Naive thymus-derived CD4-positive, alpha-beta T cell (primary cell): ENCODE measurements at regions of chr21 and their contacts with region 1.

Region 1: DNA sequence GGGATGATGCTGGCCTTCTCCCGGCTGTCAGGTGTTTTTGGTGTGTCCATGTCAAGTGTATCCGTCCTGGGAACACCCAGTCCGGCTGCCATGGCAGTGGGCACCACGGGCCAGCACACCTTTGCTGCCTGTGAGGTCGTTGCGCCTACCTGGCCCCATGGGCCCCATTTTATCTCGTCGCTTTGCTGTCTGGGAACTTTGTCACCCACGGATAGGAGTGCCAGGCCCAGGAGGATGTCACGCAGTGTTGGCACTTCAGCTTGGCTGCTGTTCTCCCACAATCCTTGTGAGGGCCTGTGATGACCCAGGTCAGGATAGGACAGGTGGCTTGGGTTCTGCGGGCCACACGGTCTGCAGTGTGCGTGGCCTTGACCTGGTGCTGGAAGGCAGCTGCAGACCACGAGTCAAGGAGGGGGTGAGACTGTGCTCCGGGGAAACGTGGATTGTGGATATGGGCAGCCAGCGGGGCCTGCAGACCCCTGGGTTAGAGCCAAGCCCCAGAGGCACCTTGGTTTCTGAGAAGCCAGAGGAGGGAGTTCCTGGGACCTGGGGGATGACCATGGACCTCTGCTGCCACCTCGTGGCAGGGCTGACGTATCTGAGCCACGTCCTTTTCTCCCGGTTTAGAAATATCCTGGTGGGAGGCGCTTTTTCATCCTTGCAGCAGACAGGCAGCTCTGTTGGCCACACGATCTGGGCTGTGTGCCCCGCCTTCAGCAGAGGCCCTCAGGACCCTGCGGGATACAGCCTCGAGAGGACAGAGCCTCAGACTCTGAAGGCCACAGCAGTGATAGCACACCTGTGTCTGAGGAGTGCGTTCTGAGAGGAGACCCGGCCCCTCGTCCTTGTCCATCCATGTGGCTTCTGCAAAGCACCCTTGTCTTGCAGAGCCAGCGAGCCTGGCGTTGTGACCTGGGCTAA is 161.1 kb upstream of the COL6A1 start:
- DNase-seq: peak; percentile 59 to 81 (median 76)
- ATAC-seq: peak; percentile 80
- H3K4me3 ChIP-seq: no peak overlapping the region
- H3K4me3 Mint-ChIP-seq: peak overlapping the region in 1 of 10 donors; percentile 1
- H3K27ac ChIP-seq: no peak overlapping the region
- H3K27ac Mint-ChIP-seq: peak overlapping the region in 7 of 9 donors; percentile 26 to 89 (median 58)
- H3K4me1 ChIP-seq: peaks cover 0 to 9% of the 10 kb centered on the region in 2 donors
- H3K4me1 Mint-ChIP-seq: peaks cover 0 to 36% (median 17%) of the 10 kb centered on the region in 7 donors
- H3K27me3 ChIP-seq: no peaks in the 10 kb centered on the region
- H3K27me3 Mint-ChIP-seq: no peaks in the 10 kb centered on the region

Region 2: DNA sequence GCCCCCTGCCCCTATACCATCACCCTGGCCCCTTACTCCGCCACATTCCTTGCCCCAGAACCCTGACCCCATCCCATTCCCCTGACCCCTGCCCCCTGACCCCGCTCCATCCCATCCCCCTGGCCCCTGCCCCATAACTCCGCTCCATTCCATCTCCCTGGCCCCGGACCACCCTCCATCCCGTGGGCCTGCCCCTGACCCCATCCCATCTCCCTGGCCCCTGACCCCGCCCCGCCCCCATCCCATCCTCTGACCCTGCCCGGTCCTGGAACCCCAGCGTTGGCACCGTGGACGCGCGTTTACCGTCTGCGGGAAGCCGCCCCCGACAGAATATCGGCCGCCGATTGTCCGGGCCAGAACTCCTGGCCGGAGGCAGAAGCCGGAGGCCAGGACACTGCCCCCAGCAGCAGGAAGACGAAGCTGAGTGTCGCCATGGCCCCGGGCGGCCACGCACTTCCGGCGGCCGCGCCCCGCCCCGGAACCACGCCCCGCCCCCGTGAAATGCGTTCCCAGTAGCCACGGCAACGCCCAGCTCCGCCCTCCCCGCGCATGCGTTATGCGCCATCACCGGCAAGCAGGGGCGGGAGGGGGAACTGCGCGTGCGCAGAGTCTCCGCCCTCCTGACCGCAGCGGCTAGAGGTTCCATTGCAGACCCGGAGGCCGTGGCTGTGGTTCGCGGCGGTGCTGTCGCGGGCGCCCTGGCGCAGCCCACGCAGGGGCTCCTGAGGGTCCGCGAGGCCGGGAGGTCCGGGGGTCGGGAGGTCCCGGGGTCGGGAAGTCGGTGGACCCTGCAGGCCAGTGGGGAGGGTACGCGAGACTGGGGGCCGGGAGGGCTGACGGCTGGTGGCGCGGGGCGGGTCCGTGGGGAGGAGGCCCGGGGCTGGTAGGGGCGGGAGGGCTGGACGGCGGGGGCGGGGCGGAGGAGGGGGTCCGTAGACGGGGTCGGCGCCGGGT is 532.7 kb before region 1 on chr21 and contains the start of gene POFUT2:
- CTCF ChIA-PET with region 1: no interaction called
- POLR2A ChIA-PET with region 1: no interaction called
- intact Hi-C with region 1: loop called in 1 of 2 experiments (anchors 1 kb)
- DNase-seq: peak; percentile 95 to 100 (median 98)
- ATAC-seq: peak; percentile 91
- H3K4me3 ChIP-seq: peak within 1 kb of the TSS; percentile 68
- H3K4me3 Mint-ChIP-seq: peak within 1 kb of the TSS; percentile 68 to 88 (median 87)
- H3K27ac ChIP-seq: peak within 1 kb of the TSS; percentile 97
- H3K27ac Mint-ChIP-seq: peak within 1 kb of the TSS; percentile 72 to 93 (median 87)
- H3K4me1 ChIP-seq: peaks cover 7 to 16% of the 10 kb centered on the region in 2 donors
- H3K4me1 Mint-ChIP-seq: peaks cover 11 to 46% (median 30%) of the 10 kb centered on the region in 7 donors
- H3K27me3 ChIP-seq: no peaks in the 10 kb centered on the region
- H3K27me3 Mint-ChIP-seq: peaks cover 0 to 10% (median 0%) of the 10 kb centered on the region in 5 donors
- total RNA-seq, gene POFUT2: 20.1 to 53.3 (median 47.8) TPM

Region 3: GRCh38 chr21:45478115-45478801 is 342.2 kb before region 1 on chr21:
- CTCF ChIA-PET with region 1: interaction called, 3 read pairs
- POLR2A ChIA-PET with region 1: no interaction called
- intact Hi-C with region 1: loop called (anchors 1 kb)
- DNase-seq: peak; percentile 66 to 88 (median 84)
- ATAC-seq: peak; percentile 88
- H3K4me3 ChIP-seq: peak overlapping the region; percentile 78
- H3K4me3 Mint-ChIP-seq: peak overlapping the region; percentile 78 to 91 (median 84)
- H3K27ac ChIP-seq: peak overlapping the region; percentile 93
- H3K27ac Mint-ChIP-seq: peak overlapping the region; percentile 93 to 100 (median 99)
- H3K4me1 ChIP-seq: peaks cover 14 to 53% of the 10 kb centered on the region in 2 donors
- H3K4me1 Mint-ChIP-seq: peaks cover 27 to 65% (median 43%) of the 10 kb centered on the region in 7 donors
- H3K27me3 ChIP-seq: no peaks in the 10 kb centered on the region
- H3K27me3 Mint-ChIP-seq: no peaks in the 10 kb centered on the region

Region 4: DNA sequence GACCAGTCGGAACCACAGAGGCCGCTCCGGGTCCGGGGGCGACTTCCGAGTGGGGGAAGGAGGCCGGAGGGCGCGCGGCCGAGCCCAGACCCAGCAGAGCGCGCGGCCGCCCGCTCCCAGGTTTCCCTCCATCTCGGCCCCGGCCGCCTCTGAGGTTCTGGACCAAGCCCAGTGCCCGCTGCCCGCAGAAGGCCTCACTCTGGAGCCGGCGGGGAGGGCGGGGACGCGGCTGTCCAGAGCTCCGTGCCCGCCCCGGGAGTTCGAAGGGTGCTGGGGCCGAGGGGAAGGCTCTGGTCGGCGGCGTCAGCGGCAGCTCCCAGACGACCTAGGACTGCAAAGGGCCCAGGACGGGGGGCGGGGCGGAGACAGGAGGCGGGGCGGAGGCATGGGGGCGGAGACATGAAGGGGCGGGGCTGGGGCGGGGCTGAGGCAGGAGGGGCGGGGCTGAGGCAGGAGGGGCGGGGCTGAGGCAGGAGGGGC is 230.1 kb before region 1 on chr21:
- CTCF ChIA-PET with region 1: interaction called, 3 read pairs
- POLR2A ChIA-PET with region 1: no interaction called
- intact Hi-C with region 1: loop called in 1 of 2 experiments (anchors 2 kb)
- DNase-seq: peak in 3 of 9 donors; percentile 72 to 81 (median 78)
- ATAC-seq: peak; percentile 83
- H3K4me3 ChIP-seq: peak overlapping the region; percentile 42
- H3K4me3 Mint-ChIP-seq: peak overlapping the region in 8 of 10 donors; percentile 21 to 69 (median 48)
- H3K27ac ChIP-seq: peak overlapping the region; percentile 65
- H3K27ac Mint-ChIP-seq: peak overlapping the region in 1 of 9 donors; percentile 16
- H3K4me1 ChIP-seq: peaks cover 21 to 22% of the 10 kb centered on the region in 2 donors
- H3K4me1 Mint-ChIP-seq: peaks cover 0 to 22% (median 7%) of the 10 kb centered on the region in 7 donors
- H3K27me3 ChIP-seq: no peaks in the 10 kb centered on the region
- H3K27me3 Mint-ChIP-seq: peaks cover 0 to 17% (median 11%) of the 10 kb centered on the region in 5 donors

Region 5: GRCh38 chr21:45724345-45724961 is 96.0 kb before region 1 on chr21:
- CTCF ChIA-PET with region 1: no interaction called
- POLR2A ChIA-PET with region 1: no interaction called
- intact Hi-C with region 1: no loop called
- DNase-seq: no peak
- ATAC-seq: no peak
- H3K4me3 ChIP-seq: no peak overlapping the region
- H3K4me3 Mint-ChIP-seq: no peak overlapping the region
- H3K27ac ChIP-seq: no peak overlapping the region
- H3K27ac Mint-ChIP-seq: peak overlapping the region in 1 of 9 donors; percentile 86
- H3K4me1 ChIP-seq: no peaks in the 10 kb centered on the region
- H3K4me1 Mint-ChIP-seq: peaks cover 0 to 12% (median 3%) of the 10 kb centered on the region in 7 donors
- H3K27me3 ChIP-seq: no peaks in the 10 kb centered on the region
- H3K27me3 Mint-ChIP-seq: peaks cover 0 to 5% (median 0%) of the 10 kb centered on the region in 5 donors

Region 6: DNA sequence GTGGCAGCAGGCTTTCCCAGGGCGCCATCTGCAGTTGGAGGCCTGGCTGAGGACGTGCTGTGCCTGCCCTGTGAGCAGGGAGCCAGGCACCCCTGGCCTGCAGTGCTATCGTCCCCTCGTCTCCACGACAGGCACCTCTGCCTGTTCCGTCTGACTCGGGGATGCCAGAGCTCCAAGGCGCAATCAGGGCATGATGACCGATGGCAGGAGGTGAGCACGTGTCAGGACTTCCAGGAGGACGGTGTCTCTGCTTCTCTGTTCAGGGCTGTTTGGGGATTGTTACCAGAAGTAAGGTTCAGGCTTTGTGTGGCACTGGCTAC is 51.7 kb before region 1 on chr21:
- CTCF ChIA-PET with region 1: no interaction called
- POLR2A ChIA-PET with region 1: no interaction called
- intact Hi-C with region 1: loop called in 1 of 2 experiments (anchors 5 kb)
- DNase-seq: peak in 1 of 9 donors; percentile 45
- ATAC-seq: no peak
- H3K4me3 ChIP-seq: no peak overlapping the region
- H3K4me3 Mint-ChIP-seq: peak overlapping the region in 7 of 10 donors; percentile 43 to 76 (median 56)
- H3K27ac ChIP-seq: no peak overlapping the region
- H3K27ac Mint-ChIP-seq: peak overlapping the region; percentile 53 to 97 (median 94)
- H3K4me1 ChIP-seq: peaks cover 0 to 29% of the 10 kb centered on the region in 2 donors
- H3K4me1 Mint-ChIP-seq: peaks cover 15 to 51% (median 38%) of the 10 kb centered on the region in 7 donors
- H3K27me3 ChIP-seq: no peaks in the 10 kb centered on the region
- H3K27me3 Mint-ChIP-seq: no peaks in the 10 kb centered on the region